ENCODE measurements at regions of chr5 and their contacts with region 1.

Region 1: DNA sequence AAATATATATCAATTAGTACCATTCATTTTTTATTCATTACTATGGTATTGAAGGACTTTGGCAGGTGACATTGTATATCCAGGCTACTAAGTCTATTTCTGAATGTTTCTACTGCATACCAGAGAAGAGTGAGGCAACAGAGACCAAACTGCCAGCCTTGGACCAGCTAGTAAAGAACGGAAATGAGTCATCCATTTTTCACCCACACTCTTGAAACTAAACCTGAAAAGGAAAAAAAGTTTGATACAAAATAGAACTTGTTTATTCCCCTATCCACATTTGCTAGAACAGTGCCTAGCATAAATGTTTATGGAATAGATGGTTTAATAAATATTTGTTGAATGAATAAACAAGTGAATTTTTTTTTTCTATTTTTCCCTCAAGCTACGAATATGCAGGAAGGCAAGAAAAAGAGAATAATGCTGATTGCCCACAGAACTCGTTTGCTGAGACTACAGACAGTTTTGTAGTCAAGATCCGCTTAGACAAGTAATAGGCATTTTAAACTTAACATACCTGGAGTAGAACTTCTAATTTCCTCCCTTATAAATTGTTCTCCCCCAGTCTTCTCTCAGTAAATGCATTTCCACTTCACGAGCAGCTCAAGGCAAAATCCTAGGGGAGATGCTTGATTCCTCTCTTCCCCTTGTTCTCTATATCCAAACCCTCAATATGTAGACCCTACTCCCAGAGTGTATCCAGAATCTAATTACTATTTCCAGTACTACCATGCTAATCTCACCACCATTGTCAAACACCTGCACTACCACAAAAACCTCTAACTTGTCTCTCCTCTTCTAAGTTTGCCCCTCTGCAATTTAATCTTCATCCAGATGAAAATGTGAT is 146.2 kb upstream of the RASA1 start:
- DNase-seq: peak; percentile 88
- H3K4me3 Mint-ChIP-seq: peak overlapping the region; percentile 16
- H3K27ac Mint-ChIP-seq: peak overlapping the region; percentile 8
- H3K4me1 Mint-ChIP-seq: peaks cover 35% of the 10 kb centered on the region
- H3K27me3 Mint-ChIP-seq: no peaks in the 10 kb centered on the region
- CTCF ChIP-seq: no peak

Region 2: GRCh38 chr5:87151547-87151946 is 30.0 kb after region 1 on chr5:
- CTCF ChIA-PET with region 1: interaction called, 7 read pairs
- POLR2A ChIA-PET with region 1: interaction called, 4 read pairs
- intact Hi-C with region 1: loop called (anchors 2 kb)
- DNase-seq: peak; percentile 82
- H3K4me3 Mint-ChIP-seq: no peak overlapping the region
- H3K27ac Mint-ChIP-seq: no peak overlapping the region
- H3K4me1 Mint-ChIP-seq: peaks cover 14% of the 10 kb centered on the region
- H3K27me3 Mint-ChIP-seq: no peaks in the 10 kb centered on the region
- CTCF ChIP-seq: no peak

Region 3: DNA sequence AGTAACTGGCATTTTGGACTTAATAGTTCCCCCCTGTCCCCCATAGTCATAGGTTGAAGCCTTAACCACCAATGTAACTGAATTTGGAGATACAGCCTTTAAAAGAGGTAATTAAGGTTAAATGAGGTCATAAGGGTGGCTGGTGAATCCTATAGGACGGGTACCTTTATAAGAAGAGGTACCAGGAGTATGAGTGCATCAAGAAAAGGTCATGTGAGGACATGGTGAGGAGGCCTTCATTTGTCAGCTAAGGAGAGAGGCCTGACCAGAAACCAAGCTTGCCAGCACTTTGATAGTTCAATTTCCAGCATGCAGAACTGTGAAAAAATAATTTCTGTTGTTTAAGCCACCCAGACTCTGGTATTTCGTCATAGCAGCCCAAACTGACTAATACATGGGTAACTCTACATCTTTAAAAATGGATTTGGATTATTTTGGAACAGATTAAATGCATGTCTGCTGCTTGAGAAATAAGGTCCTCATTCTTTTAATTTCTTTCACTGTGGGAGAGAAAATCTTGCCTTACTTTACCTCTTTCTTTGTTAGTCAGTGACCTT is 155.8 kb after region 1 on chr5:
- CTCF ChIA-PET with region 1: no interaction called
- POLR2A ChIA-PET with region 1: no interaction called
- intact Hi-C with region 1: no loop called
- DNase-seq: peak; percentile 37
- H3K4me3 Mint-ChIP-seq: no peak overlapping the region
- H3K27ac Mint-ChIP-seq: no peak overlapping the region
- H3K4me1 Mint-ChIP-seq: peaks cover 30% of the 10 kb centered on the region
- H3K27me3 Mint-ChIP-seq: no peaks in the 10 kb centered on the region
- CTCF ChIP-seq: no peak